Aorta (tissue), 5 donors: ENCODE measurements at regions of chr10 and their contacts with region 1.

Region 1: DNA sequence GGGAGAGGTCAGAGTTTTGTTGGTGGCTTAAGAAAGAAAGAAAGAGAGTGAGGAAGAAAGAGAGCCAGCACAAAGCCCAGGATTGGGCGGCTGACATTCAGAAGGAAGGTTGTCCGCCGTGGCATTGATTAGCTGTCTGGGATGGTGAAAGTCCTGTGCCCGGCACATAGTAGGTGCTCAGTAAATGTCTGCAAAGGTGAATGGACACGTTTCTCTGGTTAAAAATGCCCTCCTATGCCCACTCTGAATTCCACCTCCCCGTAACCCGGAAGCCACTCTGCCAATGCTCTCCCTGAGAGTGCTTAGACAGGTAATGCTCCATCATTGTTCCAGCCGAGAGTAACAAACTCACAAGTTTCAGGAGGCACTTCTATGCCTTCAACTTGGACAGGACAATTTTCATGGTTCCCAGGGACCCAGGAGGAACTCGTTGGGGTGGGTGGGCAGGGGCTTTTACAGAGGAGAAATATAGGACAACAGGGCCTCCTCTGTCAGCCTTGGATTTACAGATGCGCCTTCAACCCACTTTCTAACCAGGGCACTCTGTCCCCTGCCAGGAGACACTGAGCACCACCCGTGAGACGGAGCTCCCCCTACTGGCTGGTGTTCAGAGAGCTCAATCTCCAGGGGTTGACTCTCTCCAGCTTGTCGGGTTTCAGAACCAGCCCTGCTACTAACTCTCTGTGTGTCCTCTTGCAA is 411.5 kb upstream of the ZMIZ1 start:
- DNase-seq: peak; percentile 86 to 90
- ATAC-seq: peak; percentile 83
- H3K4me3 ChIP-seq: no peak overlapping the region
- H3K27ac ChIP-seq: no peak overlapping the region
- H3K4me1 ChIP-seq: no peaks in the 10 kb centered on the region
- H3K27me3 ChIP-seq: no peaks in the 10 kb centered on the region

Region 2: GRCh38 chr10:78047314-78047891 is 609.9 kb before region 1 on chr10:
- intact Hi-C with region 1: loop called in 1 of 2 experiments (anchors 10 kb)
- DNase-seq: peak; percentile 90 to 95
- ATAC-seq: peak; percentile 86
- H3K4me3 ChIP-seq: no peak overlapping the region
- H3K27ac ChIP-seq: no peak overlapping the region
- H3K4me1 ChIP-seq: no peaks in the 10 kb centered on the region
- H3K27me3 ChIP-seq: no peaks in the 10 kb centered on the region

Region 3: DNA sequence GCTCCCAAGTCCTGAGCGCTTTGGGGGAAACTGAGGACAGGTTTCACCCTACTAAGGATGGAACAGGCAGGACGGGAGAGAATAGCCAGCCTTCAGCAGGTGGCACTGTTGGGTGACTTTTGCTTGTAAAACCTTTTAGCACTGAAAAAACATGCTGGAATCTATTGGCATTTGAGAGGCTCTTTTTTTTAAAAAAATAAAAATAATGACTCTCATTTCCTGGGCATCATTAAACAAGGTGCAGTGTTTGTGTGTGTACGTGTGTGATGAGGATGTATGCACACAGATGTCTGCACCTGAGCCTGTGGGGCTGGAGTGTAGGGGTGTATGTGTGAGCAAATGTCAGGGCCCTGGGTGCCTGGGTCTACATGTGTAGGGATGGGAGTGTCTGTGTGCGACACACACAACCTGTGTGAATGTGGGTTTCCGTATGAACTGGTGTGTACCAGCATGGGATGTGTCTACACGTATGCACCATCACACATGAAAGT is 445.7 kb before region 1 on chr10:
- intact Hi-C with region 1: loop called (anchors 2 to 5 kb)
- DNase-seq: peak in 1 of 2 donors; percentile 65
- ATAC-seq: no peak
- H3K4me3 ChIP-seq: no peak overlapping the region
- H3K27ac ChIP-seq: no peak overlapping the region
- H3K4me1 ChIP-seq: no peaks in the 10 kb centered on the region
- H3K27me3 ChIP-seq: no peaks in the 10 kb centered on the region

Region 4: GRCh38 chr10:78846760-78847159 is 189.4 kb after region 1 on chr10:
- intact Hi-C with region 1: no loop called
- DNase-seq: no peak
- ATAC-seq: no peak
- H3K4me3 ChIP-seq: no peak overlapping the region
- H3K27ac ChIP-seq: no peak overlapping the region
- H3K4me1 ChIP-seq: no peaks in the 10 kb centered on the region
- H3K27me3 ChIP-seq: no peaks in the 10 kb centered on the region